Right ventricle myocardium superior (tissue), 1 donor: ENCODE measurements at regions of chr11 and their contacts with region 1.

Region 1: DNA sequence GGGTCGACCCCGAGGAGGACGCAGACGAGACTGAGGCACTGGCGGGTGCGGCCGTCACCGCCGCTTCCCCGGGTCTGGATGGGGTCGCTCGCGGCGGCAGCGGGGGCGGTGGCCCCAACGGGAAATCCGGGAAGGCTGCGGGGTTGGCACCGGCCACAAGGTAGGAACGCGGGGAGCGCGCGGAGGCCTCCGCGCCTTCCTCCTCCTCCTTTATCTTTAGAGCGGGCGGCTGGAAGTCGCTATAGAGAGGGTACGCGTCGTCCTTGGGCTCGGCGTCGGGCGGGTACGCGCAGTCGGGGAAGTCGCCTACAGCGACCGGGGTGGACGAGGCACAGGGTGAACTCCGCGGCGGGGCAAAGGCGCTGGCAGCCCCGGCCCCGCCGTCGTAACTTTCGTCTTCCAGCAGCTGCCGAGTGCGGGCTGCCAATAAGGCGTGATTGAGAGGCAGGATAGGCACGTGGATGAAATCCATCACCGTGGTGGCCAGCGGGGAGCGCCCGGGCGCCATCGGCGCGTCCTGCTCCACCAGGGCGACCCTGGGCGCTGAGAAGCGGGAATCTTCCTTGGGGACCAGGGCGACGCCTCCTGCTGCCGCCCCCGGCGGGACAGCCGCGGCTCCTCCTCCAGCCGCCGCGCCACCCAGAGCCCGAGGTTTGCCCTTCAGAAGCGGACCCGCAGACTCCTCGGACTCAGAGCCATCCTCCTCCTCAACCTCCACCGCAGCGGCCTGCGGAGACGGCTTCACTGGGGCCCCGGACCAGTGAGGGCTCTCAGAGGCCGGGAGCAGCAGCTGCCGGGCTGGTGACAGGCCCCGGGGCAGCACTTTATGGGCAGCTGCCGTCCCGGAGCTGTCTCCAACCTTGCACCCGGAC is 1.7 kb downstream of the PGR start:
- DNase-seq: peak; percentile 57
- ATAC-seq: peak; percentile 61

Region 2: DNA sequence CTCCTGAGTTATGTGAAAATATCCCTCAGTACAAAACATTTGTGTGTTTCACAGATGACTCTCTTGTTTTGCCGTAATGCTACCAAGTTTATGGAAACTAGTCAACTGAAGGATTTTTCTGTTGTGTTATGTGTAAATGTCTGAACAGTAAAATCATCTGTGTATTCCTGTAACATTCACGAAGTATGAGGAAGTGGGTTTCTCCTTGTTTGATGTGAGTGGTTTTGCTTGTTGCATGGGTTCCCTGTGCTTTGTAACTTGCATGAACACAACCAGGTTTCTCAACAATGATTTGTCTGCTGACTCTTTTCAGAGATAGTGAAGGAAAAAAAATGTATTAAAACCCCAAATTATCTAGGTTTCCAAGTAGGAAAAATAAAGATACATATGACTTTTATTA is 136.4 kb before region 1 on chr11:
- intact Hi-C with region 1: loop called (anchors 10 kb)
- DNase-seq: no peak
- ATAC-seq: no peak

Region 3: GRCh38 chr11:101034076-101034475 is 93.9 kb before region 1 on chr11:
- intact Hi-C with region 1: loop called (anchors 10 kb)
- DNase-seq: peak; percentile 77
- ATAC-seq: peak; percentile 91